HepG2 (cell line): ENCODE measurements at regions of chr7 and their contacts with region 1.

Region 1: GRCh38 chr7:116809636-116810266 is 52.6 kb upstream of the CAPZA2 start:
- DNase-seq: peak; percentile 92
- ATAC-seq: peak; percentile 58
- H3K4me3 ChIP-seq: peak overlapping the region; percentile 21 to 64 (median 62); a peak in 5 of 6 replicates
- H3K27ac ChIP-seq: peak overlapping the region; percentile 96
- H3K4me1 ChIP-seq: peaks cover 87% of the 10 kb centered on the region
- H3K27me3 ChIP-seq: no peaks in the 10 kb centered on the region
- CTCF ChIP-seq: peak; percentile 82
- EP300 ChIP-seq: peak in 1 of 2 experiments; percentile 93; a peak in 2 of 4 replicates
- POLR2A ChIP-seq: no peak
- RAD21 ChIP-seq: peak; percentile 76

Region 2: DNA sequence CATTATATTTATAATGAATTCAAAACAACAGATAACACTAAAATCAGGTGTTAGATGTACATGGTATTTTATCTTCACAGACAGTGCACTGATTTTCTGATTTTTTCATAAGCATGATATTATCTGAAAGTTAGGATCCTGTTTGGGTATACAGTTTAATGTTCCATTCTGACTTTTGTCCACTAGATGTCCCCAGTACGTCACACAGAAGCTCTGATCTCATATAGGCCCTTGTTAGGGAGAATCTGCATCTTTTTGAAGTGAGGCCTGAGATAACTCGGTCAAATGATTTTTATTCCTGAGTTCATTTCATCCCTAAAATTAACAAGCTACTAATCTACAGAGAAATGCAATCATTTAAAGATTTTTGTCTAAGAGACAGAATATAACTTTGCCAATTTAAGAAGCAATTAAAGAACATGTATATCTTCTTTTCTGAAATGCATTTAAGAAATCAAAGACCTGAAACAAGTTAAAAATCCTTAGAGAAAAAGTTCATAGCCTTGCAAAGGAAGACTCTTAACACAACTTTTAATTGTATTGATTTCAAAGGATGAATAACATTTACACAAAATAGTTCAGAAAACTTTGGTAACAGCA is 671.4 kb before region 1 on chr7:
- CTCF ChIA-PET with region 1: no interaction called
- POLR2A ChIA-PET with region 1: no interaction called
- in situ Hi-C with region 1: no loop called
- intact Hi-C with region 1: loop called (anchors 1 kb)
- DNase-seq: peak; percentile 52
- ATAC-seq: peak; percentile 90
- H3K4me3 ChIP-seq: no peak overlapping the region
- H3K27ac ChIP-seq: no peak overlapping the region
- H3K4me1 ChIP-seq: peaks cover 13% of the 10 kb centered on the region
- H3K27me3 ChIP-seq: 0 out of 5 replicates have a peak, but pooled peaks cover 2 to 3% of the 10 kb centered on the region in 2 experiments
- CTCF ChIP-seq: peak; percentile 81
- EP300 ChIP-seq: no peak
- POLR2A ChIP-seq: no peak
- RAD21 ChIP-seq: peak; percentile 43; the same call in 1 of the 2 replicates

Region 3: GRCh38 chr7:116258734-116259133 is 551.0 kb before region 1 on chr7:
- CTCF ChIA-PET with region 1: no interaction called
- POLR2A ChIA-PET with region 1: no interaction called
- in situ Hi-C with region 1: loop called (anchors 5 kb)
- intact Hi-C with region 1: loop called (anchors 1 kb)
- DNase-seq: peak; percentile 22
- ATAC-seq: no peak
- H3K4me3 ChIP-seq: no peak overlapping the region
- H3K27ac ChIP-seq: no peak overlapping the region
- H3K4me1 ChIP-seq: no peaks in the 10 kb centered on the region
- H3K27me3 ChIP-seq: no peaks in the 10 kb centered on the region
- CTCF ChIP-seq: peak; percentile 66
- EP300 ChIP-seq: no peak
- POLR2A ChIP-seq: no peak
- RAD21 ChIP-seq: peak; percentile 57; the same call in 1 of the 2 replicates

Region 4: GRCh38 chr7:116588641-116589594 is 220.8 kb before region 1 on chr7:
- CTCF ChIA-PET with region 1: interaction called, 9 read pairs
- POLR2A ChIA-PET with region 1: interaction called, 5 read pairs
- in situ Hi-C with region 1: loop called (anchors 5 kb)
- intact Hi-C with region 1: loop called (anchors 1 kb)
- DNase-seq: peak; percentile 40
- ATAC-seq: peak; percentile 64
- H3K4me3 ChIP-seq: no peak overlapping the region
- H3K27ac ChIP-seq: no peak overlapping the region
- H3K4me1 ChIP-seq: peaks cover 29% of the 10 kb centered on the region
- H3K27me3 ChIP-seq: peaks cover 0 to 9% of the 10 kb centered on the region in 2 experiments; a peak in 2 of 5 replicates
- CTCF ChIP-seq: peak; percentile 68
- EP300 ChIP-seq: no peak
- POLR2A ChIP-seq: no peak
- RAD21 ChIP-seq: no peak

Region 5: DNA sequence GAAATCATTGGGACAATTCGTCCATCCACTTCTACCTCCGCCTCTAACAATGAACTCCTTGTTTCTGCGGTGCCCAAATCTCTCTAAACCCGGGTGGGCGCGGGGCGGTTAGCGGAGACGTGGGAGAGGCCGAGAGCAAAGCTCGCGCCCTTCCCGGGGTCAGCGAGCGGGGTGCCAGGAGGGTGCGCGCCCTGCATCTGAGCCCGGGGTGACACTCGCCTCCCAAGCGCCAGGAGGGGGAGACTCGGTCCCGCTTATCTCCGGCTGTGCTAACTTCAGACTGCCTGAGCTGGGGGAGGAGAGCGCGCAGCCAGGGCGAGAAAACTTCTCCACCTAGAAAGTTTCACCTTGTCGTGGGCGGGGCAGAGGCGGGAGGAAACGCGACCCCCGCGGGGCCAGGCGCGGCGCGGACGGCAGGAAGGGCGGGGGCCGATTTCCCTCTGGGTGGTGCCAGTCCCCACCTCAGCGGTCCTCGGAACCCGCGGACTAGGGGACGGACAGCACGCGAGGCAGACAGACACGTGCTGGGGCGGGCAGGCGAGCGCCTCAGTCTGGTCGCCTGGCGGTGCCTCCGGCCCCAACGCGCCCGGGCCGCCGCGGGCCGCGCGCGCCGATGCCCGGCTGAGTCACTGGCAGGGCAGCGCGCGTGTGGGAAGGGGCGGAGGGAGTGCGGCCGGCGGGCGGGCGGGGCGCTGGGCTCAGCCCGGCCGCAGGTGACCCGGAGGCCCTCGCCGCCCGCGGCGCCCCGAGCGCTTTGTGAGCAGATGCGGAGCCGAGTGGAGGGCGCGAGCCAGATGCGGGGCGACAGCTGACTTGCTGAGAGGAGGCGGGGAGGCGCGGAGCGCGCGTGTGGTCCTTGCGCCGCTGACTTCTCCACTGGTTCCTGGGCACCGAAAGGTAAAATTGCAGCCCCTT is 137.8 kb before region 1 on chr7 and contains the start of gene MET:
- CTCF ChIA-PET with region 1: interaction called, 25 read pairs
- POLR2A ChIA-PET with region 1: interaction called, 21 read pairs
- in situ Hi-C with region 1: loop called (anchors 5 kb)
- intact Hi-C with region 1: loop called (anchors 1 kb)
- DNase-seq: peak; percentile 80
- ATAC-seq: peak; percentile 96
- H3K4me3 ChIP-seq: peak within 1 kb of the TSS; percentile 74 to 97 (median 77)
- H3K27ac ChIP-seq: peak within 1 kb of the TSS; percentile 72
- H3K4me1 ChIP-seq: peaks cover 37% of the 10 kb centered on the region
- H3K27me3 ChIP-seq: no peaks in the 10 kb centered on the region; a peak in 1 of 5 replicates
- CTCF ChIP-seq: peak; percentile 97
- EP300 ChIP-seq: peak in 1 of 2 experiments; percentile 40; a peak in 1 of 4 replicates
- POLR2A ChIP-seq: peak in 1 of 2 experiments; percentile 65; a peak in 1 of 4 replicates
- RAD21 ChIP-seq: peak; percentile 93
- total RNA-seq, gene MET: 23.3 and 31.5 TPM in 2 replicates

Region 6: DNA sequence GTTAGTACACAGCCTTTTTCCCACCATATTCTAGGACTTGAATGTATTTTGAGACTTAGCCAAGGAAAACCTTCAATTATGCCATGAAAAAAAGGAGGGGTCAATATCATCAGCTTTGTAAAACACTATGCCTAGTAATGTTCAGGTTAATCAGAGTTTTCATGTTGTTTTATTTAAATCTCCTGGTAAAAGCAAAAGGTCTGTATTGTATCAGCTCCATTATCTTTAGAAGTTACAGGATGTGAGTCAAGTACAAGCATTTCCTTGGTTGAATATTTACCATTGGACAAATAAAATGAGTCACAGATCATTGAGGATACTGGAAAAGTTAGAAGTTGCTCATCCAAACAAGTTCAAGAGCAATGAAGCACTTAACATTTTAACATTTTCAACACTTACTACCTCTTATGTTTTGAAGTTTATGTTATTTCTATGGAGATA is 37.3 kb before region 1 on chr7:
- CTCF ChIA-PET with region 1: no interaction called
- POLR2A ChIA-PET with region 1: interaction called, 10 read pairs
- in situ Hi-C with region 1: no loop called
- intact Hi-C with region 1: loop called (anchors 2 kb)
- DNase-seq: peak; percentile 87
- ATAC-seq: peak; percentile 97
- H3K4me3 ChIP-seq: no peak overlapping the region; a peak in 1 of 6 replicates
- H3K27ac ChIP-seq: peak overlapping the region; percentile 56
- H3K4me1 ChIP-seq: peaks cover 42% of the 10 kb centered on the region
- H3K27me3 ChIP-seq: no peaks in the 10 kb centered on the region
- CTCF ChIP-seq: no peak
- EP300 ChIP-seq: peak in 1 of 2 experiments; percentile 92; a peak in 2 of 4 replicates
- POLR2A ChIP-seq: no peak
- RAD21 ChIP-seq: no peak

Region 7: GRCh38 chr7:117127585-117128168 is 317.9 kb after region 1 on chr7:
- CTCF ChIA-PET with region 1: no interaction called
- POLR2A ChIA-PET with region 1: interaction called, 4 read pairs
- in situ Hi-C with region 1: no loop called
- intact Hi-C with region 1: loop called (anchors 2 kb)
- DNase-seq: peak; percentile 55
- ATAC-seq: peak; percentile 60; the same call in 2 of the 3 replicates
- H3K4me3 ChIP-seq: no peak overlapping the region
- H3K27ac ChIP-seq: no peak overlapping the region
- H3K4me1 ChIP-seq: peaks cover 12% of the 10 kb centered on the region
- H3K27me3 ChIP-seq: no peaks in the 10 kb centered on the region
- CTCF ChIP-seq: peak; percentile 68
- EP300 ChIP-seq: no peak
- POLR2A ChIP-seq: no peak
- RAD21 ChIP-seq: no peak